ENCODE measurements at regions of chr6 and their contacts with region 1.

Region 1: DNA sequence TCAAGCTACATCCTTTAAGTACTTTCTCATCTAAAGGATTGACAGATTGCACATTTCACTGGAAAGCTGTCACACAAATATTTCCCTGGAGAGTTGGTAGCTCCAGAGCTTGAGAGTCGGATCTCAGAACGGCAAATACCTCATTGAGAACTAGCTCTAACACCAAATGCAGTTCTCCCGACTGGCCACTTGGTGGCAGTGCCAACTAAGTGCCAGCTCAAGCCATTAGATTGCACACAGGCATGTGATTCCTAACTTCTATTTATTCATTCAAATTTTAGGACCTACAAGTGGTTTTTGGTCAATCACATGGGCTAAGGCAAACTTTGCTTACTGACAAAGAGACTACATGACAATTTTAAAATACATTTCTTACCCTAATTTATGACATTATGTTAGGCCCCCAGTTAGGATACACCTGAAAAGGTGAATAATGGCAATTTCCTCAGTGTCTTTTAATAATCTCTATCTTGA is 7.9 kb upstream of the MCHR2 start:
- DNase-seq: peak; percentile 40
- H3K4me3 ChIP-seq: no peak overlapping the region
- H3K27ac ChIP-seq: no peak overlapping the region
- H3K4me1 ChIP-seq: peaks cover 4% of the 10 kb centered on the region
- H3K27me3 ChIP-seq: no peaks in the 10 kb centered on the region
- CTCF ChIP-seq: peak; percentile 94 to 95

Region 2: GRCh38 chr6:99458319-99458718 is 543.6 kb before region 1 on chr6:
- CTCF ChIA-PET with region 1: no interaction called
- dilution Hi-C with region 1: no loop called
- in situ Hi-C with region 1: no loop called
- intact Hi-C with region 1: loop called (anchors 5 kb)
- DNase-seq: peak; percentile 12
- H3K4me3 ChIP-seq: no peak overlapping the region
- H3K27ac ChIP-seq: no peak overlapping the region
- H3K4me1 ChIP-seq: no peaks in the 10 kb centered on the region
- H3K27me3 ChIP-seq: no peaks in the 10 kb centered on the region
- CTCF ChIP-seq: peak; percentile 27 to 32

Region 3: DNA sequence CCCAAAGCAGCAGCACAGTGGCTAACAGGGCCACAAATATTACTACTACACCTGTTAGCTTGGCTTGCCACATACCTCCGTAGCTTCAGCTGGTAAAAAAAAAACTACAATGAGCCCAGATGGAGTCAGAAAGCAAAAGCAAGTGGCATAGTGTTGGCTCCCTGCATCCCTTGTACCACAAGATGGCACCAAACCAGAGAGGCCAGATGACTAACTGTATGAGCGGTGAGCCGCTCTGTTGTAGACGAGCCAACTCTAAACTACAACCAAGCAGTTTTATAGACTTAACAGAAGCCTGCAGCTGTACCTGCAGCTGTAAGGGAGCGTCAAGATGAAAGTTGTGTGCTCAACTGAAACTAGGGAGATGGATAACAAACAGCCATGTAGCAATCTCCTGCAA is 76.6 kb after region 1 on chr6:
- CTCF ChIA-PET with region 1: interaction called, 3 read pairs
- dilution Hi-C with region 1: no loop called
- in situ Hi-C with region 1: no loop called
- intact Hi-C with region 1: loop called (anchors 5 kb)
- DNase-seq: peak; percentile 33
- H3K4me3 ChIP-seq: no peak overlapping the region
- H3K27ac ChIP-seq: no peak overlapping the region
- H3K4me1 ChIP-seq: no peaks in the 10 kb centered on the region
- H3K27me3 ChIP-seq: peaks cover 7% of the 10 kb centered on the region
- CTCF ChIP-seq: peak; percentile 30 to 64

Region 4: DNA sequence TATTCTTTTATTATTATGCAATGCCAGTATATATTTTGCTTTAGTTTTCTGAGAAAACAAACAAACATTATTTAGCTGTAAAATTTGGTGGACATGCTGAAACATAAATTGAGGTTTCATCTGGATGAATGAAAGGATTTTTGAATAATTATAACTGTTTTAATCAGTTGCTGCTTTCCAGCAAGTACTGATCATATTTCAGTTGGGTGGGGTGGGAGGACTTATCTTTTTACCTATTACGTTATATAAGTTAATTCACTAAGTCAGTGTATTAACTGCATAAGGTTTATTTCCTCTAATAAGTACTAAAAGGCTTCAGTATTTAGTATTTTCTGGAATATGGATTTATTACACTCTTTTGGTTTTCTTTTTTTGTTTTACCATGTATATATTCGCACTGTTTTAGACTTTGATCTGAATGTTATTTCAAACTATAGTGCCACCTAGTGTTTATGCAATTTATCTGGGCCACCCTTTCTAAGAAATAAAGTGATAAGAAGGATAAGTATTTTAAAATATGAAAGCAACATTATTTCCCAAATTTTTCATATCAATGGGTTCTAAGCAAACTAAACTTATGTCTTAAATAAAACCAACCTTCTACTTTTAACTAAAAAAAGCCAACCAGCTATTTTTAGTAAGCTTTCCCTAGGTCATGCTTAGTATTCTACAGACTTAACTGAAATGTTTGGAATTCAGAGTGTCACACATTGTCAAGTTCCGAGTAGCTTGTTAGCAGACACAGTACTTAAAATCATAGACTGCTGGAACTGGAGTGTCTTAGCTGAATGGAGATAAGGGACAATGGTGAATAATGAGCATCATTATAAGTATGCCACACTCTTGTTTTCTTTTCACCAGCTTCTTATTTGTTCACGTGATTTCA is 97.5 kb after region 1 on chr6:
- CTCF ChIA-PET with region 1: no interaction called
- dilution Hi-C with region 1: no loop called
- in situ Hi-C with region 1: loop called in 1 of 2 experiments (anchors 5 kb)
- intact Hi-C with region 1: loop called (anchors 1 kb)
- DNase-seq: no peak
- H3K4me3 ChIP-seq: no peak overlapping the region
- H3K27ac ChIP-seq: no peak overlapping the region
- H3K4me1 ChIP-seq: no peaks in the 10 kb centered on the region
- H3K27me3 ChIP-seq: peaks cover 2% of the 10 kb centered on the region
- CTCF ChIP-seq: peak; percentile 55